BJ (cell line): ENCODE measurements at regions of chr9 and their contacts with region 1.

Region 1: DNA sequence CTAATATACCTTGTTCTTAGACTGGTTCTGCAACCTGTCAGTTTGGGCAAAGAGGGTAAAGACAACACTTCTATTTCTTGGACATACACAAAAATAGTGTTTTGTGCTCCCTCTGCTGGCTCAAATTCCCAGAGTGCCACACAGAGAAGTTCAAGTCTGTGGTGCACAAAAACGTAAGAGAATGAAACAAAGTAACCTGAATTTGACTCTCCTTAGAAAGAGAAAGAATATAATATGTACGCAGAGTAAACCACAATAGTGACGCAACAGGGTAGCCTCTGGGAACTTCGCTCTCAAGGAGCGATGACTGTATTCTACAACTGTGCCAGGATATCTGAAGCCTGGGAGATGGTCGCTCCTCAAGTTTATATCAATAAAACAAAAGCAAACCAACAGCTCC is 18.5 kb downstream of the DDX31 start:
- DNase-seq: no peak
- H3K4me3 ChIP-seq: no peak overlapping the region
- H3K27me3 ChIP-seq: no peaks in the 10 kb centered on the region
- CTCF ChIP-seq: peak; percentile 68

Region 2: DNA sequence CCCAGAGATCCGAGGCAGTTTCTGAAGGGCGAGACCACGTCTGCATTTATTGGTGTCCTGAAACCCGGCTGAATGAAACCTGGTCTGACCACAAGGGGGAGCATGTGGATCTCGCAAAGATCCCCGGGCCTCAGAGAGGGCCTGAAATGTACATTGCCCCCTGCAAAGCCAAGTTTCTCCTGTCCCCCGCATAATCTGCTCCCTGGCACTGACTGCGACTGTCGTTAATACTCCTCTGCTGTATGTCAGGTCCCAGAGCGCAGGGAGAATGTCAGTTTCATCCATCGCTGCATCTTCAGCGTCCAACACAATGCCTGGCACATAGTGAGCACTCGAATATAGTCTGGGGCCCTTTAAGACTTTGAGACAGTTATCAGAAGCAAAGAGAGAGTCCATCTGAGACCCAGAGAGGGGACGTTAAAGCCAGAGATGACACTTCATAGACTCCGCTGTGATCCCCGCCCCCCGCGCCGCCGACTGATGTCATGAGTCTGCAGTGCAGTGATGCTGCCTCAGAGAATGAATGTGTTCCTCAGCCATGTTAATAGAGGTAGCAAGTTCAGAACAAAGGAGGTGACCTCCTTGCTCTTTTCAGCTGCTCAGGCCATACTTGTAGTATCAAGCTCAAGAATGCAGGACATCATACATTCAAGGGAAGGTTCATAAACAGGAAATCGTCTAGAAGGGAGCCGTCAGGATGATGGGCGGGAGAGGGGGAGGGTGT is 143.3 kb before region 1 on chr9:
- CTCF ChIA-PET with region 1: interaction called, 14 read pairs
- POLR2A ChIA-PET with region 1: no interaction called
- DNase-seq: no peak
- H3K4me3 ChIP-seq: no peak overlapping the region
- H3K27me3 ChIP-seq: peaks cover 23% of the 10 kb centered on the region
- CTCF ChIP-seq: peak; percentile 84

Region 3: GRCh38 chr9:132663117-132663516 is 11.9 kb after region 1 on chr9:
- CTCF ChIA-PET with region 1: interaction called, 18 read pairs
- POLR2A ChIA-PET with region 1: no interaction called
- DNase-seq: no peak
- H3K4me3 ChIP-seq: no peak overlapping the region
- H3K27me3 ChIP-seq: no peaks in the 10 kb centered on the region
- CTCF ChIP-seq: no peak